CD8-positive, alpha-beta T cell (primary cell): ENCODE measurements at regions of chr21 and their contacts with region 1.

Region 1: DNA sequence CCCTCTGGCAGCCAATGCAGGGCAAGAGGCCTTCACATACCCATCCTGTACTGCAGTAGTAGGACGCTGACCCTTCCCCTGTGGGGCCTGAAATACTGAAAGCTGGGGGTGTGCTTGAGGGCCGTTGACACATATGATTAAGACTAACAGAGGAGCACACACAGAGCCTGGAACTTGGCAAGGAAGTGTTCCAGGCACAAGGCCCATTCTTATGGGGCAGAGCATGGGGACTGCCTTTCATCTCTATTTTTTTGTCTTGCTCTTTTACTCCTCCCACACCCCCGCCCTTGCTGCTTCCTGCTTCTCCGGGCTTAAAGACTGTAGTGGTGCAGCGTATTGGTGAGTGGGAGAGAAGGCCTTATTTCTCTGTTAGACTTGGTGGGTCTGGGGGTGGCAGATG is 137.4 kb downstream of the BACH1 start:
- DNase-seq: peak in 8 of 9 experiments; percentile 20 to 70 (median 40)
- ATAC-seq: peak; percentile 95
- H3K4me3 ChIP-seq: peak overlapping the region; percentile 25 to 33
- H3K4me3 Mint-ChIP-seq: peak overlapping the region; percentile 81
- H3K27ac ChIP-seq: peak overlapping the region; percentile 6 to 43
- H3K27ac Mint-ChIP-seq: peak overlapping the region; percentile 96
- H3K4me1 ChIP-seq: peaks cover 19% of the 10 kb centered on the region
- H3K4me1 Mint-ChIP-seq: peaks cover 42% of the 10 kb centered on the region
- H3K27me3 ChIP-seq: no peaks in the 10 kb centered on the region
- H3K27me3 Mint-ChIP-seq: no peaks in the 10 kb centered on the region
- CTCF ChIP-seq: no peak

Region 2: DNA sequence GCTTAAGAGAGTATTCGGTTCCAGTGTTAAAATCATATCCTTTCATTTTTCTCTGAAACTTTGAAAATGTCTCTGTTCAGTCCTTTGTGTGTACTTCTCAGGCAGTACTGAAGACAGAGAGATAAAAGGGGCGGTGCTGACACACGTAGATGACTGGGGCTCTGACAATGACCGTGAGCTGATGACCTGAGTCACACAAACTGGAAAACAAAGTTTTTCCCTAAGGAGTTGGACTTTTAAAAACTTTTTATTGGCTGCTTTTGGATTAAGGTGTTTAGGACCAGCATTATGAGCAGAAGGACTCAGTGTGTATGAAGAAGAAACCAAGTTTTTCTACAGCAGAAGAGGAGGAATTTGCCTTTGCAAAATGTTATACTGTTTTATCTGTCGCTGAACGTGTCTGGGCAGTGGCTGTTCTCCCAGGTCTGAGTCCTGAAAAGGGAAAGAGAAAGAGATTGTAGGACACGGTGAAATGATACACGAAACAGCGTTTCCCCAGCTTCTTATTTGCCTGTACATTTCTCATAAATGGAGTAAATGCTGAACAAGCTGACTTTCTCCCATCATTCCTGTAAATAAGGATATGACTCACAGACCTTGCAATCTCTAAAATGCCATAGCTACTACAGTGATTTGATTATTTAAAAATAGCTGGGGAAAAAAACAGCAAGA is 254.2 kb before region 1 on chr21:
- CTCF ChIA-PET with region 1: no interaction called
- POLR2A ChIA-PET with region 1: no interaction called
- intact Hi-C with region 1: no loop called
- DNase-seq: peak in 1 of 9 experiments; percentile 2
- ATAC-seq: no peak
- H3K4me3 ChIP-seq: no peak overlapping the region
- H3K4me3 Mint-ChIP-seq: no peak overlapping the region
- H3K27ac ChIP-seq: no peak overlapping the region
- H3K27ac Mint-ChIP-seq: no peak overlapping the region
- H3K4me1 ChIP-seq: no peaks in the 10 kb centered on the region
- H3K4me1 Mint-ChIP-seq: no peaks in the 10 kb centered on the region
- H3K27me3 ChIP-seq: no peaks in the 10 kb centered on the region
- H3K27me3 Mint-ChIP-seq: no peaks in the 10 kb centered on the region
- CTCF ChIP-seq: no peak

Region 3: GRCh38 chr21:29382006-29382654 is 54.0 kb before region 1 on chr21:
- CTCF ChIA-PET with region 1: interaction called, 3 read pairs
- POLR2A ChIA-PET with region 1: no interaction called
- intact Hi-C with region 1: loop called in 1 of 2 experiments (anchors 10 kb)
- DNase-seq: no peak
- ATAC-seq: no peak
- H3K4me3 ChIP-seq: no peak overlapping the region
- H3K4me3 Mint-ChIP-seq: no peak overlapping the region
- H3K27ac ChIP-seq: no peak overlapping the region
- H3K27ac Mint-ChIP-seq: no peak overlapping the region
- H3K4me1 ChIP-seq: no peaks in the 10 kb centered on the region
- H3K4me1 Mint-ChIP-seq: peaks cover 3% of the 10 kb centered on the region
- H3K27me3 ChIP-seq: no peaks in the 10 kb centered on the region
- H3K27me3 Mint-ChIP-seq: no peaks in the 10 kb centered on the region
- CTCF ChIP-seq: no peak

Region 4: DNA sequence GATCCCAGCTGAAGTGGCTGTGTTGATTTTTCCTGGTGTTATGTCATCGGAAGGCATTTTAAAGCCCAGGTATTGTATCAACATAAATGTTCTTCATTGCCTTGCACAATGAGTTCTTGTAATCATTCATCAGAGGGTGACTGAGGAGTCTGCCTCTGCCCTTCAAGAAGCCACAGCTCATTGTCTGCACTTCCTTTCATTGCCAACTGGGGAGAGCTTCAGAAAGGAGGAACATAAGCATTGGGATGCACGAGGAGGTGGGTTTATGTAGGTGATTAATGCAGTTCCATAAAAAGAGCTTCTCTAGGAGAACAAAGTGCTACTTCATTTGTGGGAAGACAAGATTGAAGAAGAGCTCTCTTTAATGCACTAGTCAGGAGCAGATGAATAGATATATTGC is 13.0 kb before region 1 on chr21:
- CTCF ChIA-PET with region 1: no interaction called
- POLR2A ChIA-PET with region 1: no interaction called
- intact Hi-C with region 1: no loop called
- DNase-seq: no peak
- ATAC-seq: no peak
- H3K4me3 ChIP-seq: no peak overlapping the region
- H3K4me3 Mint-ChIP-seq: no peak overlapping the region
- H3K27ac ChIP-seq: no peak overlapping the region
- H3K27ac Mint-ChIP-seq: no peak overlapping the region
- H3K4me1 ChIP-seq: no peaks in the 10 kb centered on the region
- H3K4me1 Mint-ChIP-seq: peaks cover 27% of the 10 kb centered on the region
- H3K27me3 ChIP-seq: no peaks in the 10 kb centered on the region
- H3K27me3 Mint-ChIP-seq: no peaks in the 10 kb centered on the region
- CTCF ChIP-seq: no peak

Region 5: GRCh38 chr21:29449306-29449950 is 13.3 kb after region 1 on chr21:
- CTCF ChIA-PET with region 1: interaction called, 4 read pairs
- POLR2A ChIA-PET with region 1: interaction called, 13 read pairs
- intact Hi-C with region 1: loop called in 1 of 2 experiments (anchors 1 kb)
- DNase-seq: peak in 3 of 9 experiments; percentile 41 to 69 (median 42)
- ATAC-seq: peak; percentile 84
- H3K4me3 ChIP-seq: no peak overlapping the region
- H3K4me3 Mint-ChIP-seq: peak overlapping the region; percentile 70
- H3K27ac ChIP-seq: peak overlapping the region; percentile 52 to 65
- H3K27ac Mint-ChIP-seq: peak overlapping the region; percentile 97
- H3K4me1 ChIP-seq: peaks cover 23% of the 10 kb centered on the region
- H3K4me1 Mint-ChIP-seq: peaks cover 40% of the 10 kb centered on the region
- H3K27me3 ChIP-seq: no peaks in the 10 kb centered on the region
- H3K27me3 Mint-ChIP-seq: no peaks in the 10 kb centered on the region
- CTCF ChIP-seq: no peak